GM13976 (cell line): ENCODE measurements at regions of chr11 and their contacts with region 1.

Region 1: GRCh38 chr11:26297189-26297975 is 34.5 kb upstream of the ANO3 start:
- DNase-seq: peak; percentile 37
- CTCF ChIP-seq: peak; percentile 49

Region 2: DNA sequence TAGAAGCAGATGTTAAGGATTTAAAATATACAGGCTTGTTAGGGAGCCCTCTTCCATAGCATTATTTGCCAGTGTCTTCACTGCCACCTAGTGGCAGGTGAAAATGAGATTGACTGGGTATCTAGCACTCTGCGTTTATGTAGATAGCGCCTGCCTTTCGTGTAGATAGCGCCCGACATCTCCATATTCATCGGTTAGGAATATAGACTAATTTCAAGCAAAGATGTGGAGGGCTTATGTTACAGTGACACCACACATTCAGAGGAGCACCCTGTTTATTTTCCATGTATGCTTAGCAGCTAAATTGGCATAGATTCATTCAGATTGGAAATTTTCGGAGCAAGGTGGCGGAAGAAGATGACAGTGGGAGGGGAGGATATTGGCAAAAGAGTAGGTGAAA is 352.5 kb after region 1 on chr11:
- in situ Hi-C with region 1: loop called (anchors 10 kb)
- DNase-seq: peak; percentile 32
- CTCF ChIP-seq: peak; percentile 46